Upper lobe of right lung (tissue), 1 donor: ENCODE measurements at regions of chr3 and their contacts with region 1.

Region 1: GRCh38 chr3:160707187-160707794 is 30.3 kb downstream of the ARL14 start:
- DNase-seq: no peak
- ATAC-seq: peak; percentile 76
- H3K4me3 ChIP-seq: no peak overlapping the region
- H3K27ac ChIP-seq: no peak overlapping the region
- H3K4me1 ChIP-seq: peaks cover 4% of the 10 kb centered on the region
- H3K27me3 ChIP-seq: peaks cover 13% of the 10 kb centered on the region
- CTCF ChIP-seq: peak; percentile 62

Region 2: GRCh38 chr3:160941885-160942494 is 234.7 kb after region 1 on chr3:
- intact Hi-C with region 1: loop called (anchors 5 kb)
- DNase-seq: no peak
- ATAC-seq: peak; percentile 92
- H3K4me3 ChIP-seq: no peak overlapping the region
- H3K27ac ChIP-seq: no peak overlapping the region
- H3K4me1 ChIP-seq: peaks cover 8% of the 10 kb centered on the region
- H3K27me3 ChIP-seq: no peaks in the 10 kb centered on the region
- CTCF ChIP-seq: peak; percentile 92